Natural killer cell (primary cell): ENCODE measurements at regions of chr1 and their contacts with region 1.

Region 1: GRCh38 chr1:117128323-117129079 is 7.0 kb upstream of the TRIM45 start:
- DNase-seq: peak in 1 of 2 donors; percentile 56
- ATAC-seq: peak in 1 of 3 donors; percentile 52
- H3K4me3 ChIP-seq: no peak overlapping the region
- H3K4me3 Mint-ChIP-seq: no peak overlapping the region
- H3K27ac ChIP-seq: no peak overlapping the region
- H3K27ac Mint-ChIP-seq: no peak overlapping the region
- H3K4me1 ChIP-seq: no peaks in the 10 kb centered on the region
- H3K4me1 Mint-ChIP-seq: no peaks in the 10 kb centered on the region
- H3K27me3 ChIP-seq: no peaks in the 10 kb centered on the region
- H3K27me3 Mint-ChIP-seq: peaks cover 5 to 14% of the 10 kb centered on the region in 2 donors
- CTCF ChIP-seq: peak; percentile 43

Region 2: GRCh38 chr1:117067533-117068370 is 60.7 kb before region 1 on chr1:
- intact Hi-C with region 1: loop called (anchors 1 kb)
- DNase-seq: peak in 1 of 2 donors; percentile 63
- ATAC-seq: peak; percentile 73 to 96 (median 94)
- H3K4me3 ChIP-seq: no peak overlapping the region
- H3K4me3 Mint-ChIP-seq: no peak overlapping the region
- H3K27ac ChIP-seq: no peak overlapping the region
- H3K27ac Mint-ChIP-seq: no peak overlapping the region
- H3K4me1 ChIP-seq: no peaks in the 10 kb centered on the region
- H3K4me1 Mint-ChIP-seq: peaks cover 0 to 6% of the 10 kb centered on the region in 2 donors
- H3K27me3 ChIP-seq: no peaks in the 10 kb centered on the region
- H3K27me3 Mint-ChIP-seq: no peaks in the 10 kb centered on the region
- CTCF ChIP-seq: peak; percentile 65

Region 3: GRCh38 chr1:117079737-117080136 is 48.8 kb before region 1 on chr1:
- intact Hi-C with region 1: no loop called
- DNase-seq: no peak
- ATAC-seq: no peak
- H3K4me3 ChIP-seq: no peak overlapping the region
- H3K4me3 Mint-ChIP-seq: no peak overlapping the region
- H3K27ac ChIP-seq: no peak overlapping the region
- H3K27ac Mint-ChIP-seq: no peak overlapping the region
- H3K4me1 ChIP-seq: no peaks in the 10 kb centered on the region
- H3K4me1 Mint-ChIP-seq: no peaks in the 10 kb centered on the region
- H3K27me3 ChIP-seq: no peaks in the 10 kb centered on the region
- H3K27me3 Mint-ChIP-seq: no peaks in the 10 kb centered on the region
- CTCF ChIP-seq: no peak